HepG2 (cell line): ENCODE measurements at regions of chr17 and their contacts with region 1.

Region 1: GRCh38 chr17:73156166-73156840 is 8.5 kb upstream of the SSTR2 start:
- DNase-seq: peak; percentile 70
- ATAC-seq: peak; percentile 95
- H3K4me3 ChIP-seq: peak overlapping the region in 2 of 3 experiments; percentile 13 to 51; a peak in 4 of 6 replicates
- H3K27ac ChIP-seq: no peak overlapping the region
- H3K4me1 ChIP-seq: peaks cover 59% of the 10 kb centered on the region
- H3K27me3 ChIP-seq: peaks cover 10 to 64% of the 10 kb centered on the region in 2 experiments
- CTCF ChIP-seq: peak; percentile 94
- EP300 ChIP-seq: no peak
- POLR2A ChIP-seq: no peak
- RAD21 ChIP-seq: peak; percentile 94

Region 2: DNA sequence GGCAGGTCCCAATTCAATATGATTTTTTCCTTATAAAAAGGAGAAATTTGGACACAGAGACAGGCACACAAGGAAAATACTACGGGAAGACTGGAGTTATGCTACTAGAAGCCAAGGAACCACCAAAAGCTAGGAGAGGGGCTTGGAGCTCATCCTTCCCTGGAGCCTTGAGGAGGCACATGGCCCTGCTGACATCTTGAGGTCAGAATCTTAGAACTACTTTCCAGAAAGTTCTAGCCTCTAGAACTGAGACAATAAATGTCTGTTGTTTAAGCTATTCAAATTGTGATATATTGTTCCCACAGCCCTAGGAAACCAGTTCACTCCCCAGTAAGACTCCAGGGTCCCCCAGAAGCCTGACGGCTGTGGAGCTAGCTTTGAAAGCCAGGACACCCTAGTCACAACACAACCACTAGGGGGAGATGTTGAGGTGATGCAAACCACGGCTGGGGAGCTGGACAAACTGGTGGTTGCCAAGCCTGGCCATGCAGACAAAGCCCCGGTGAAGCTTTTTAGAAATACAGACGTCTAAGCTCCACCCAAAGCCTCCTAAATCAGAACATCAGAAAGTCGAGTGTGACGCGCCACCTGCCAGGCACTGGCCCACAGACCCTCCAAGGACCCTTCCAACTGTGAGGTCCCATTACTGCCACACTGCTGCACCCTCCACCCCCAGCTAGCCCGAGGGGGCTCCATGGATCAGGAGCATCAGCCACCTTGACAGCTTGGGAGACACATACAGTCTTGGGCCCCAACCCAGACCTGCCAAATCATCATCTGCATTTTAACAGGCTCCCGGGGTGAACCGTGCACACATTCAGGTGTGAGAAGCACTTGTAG is 170.2 kb before region 1 on chr17:
- CTCF ChIA-PET with region 1: interaction called, 22 read pairs
- POLR2A ChIA-PET with region 1: interaction called, 4 read pairs
- in situ Hi-C with region 1: loop called (anchors 5 kb)
- intact Hi-C with region 1: loop called (anchors 1 kb)
- DNase-seq: peak; percentile 79
- ATAC-seq: peak; percentile 97
- H3K4me3 ChIP-seq: no peak overlapping the region
- H3K27ac ChIP-seq: no peak overlapping the region
- H3K4me1 ChIP-seq: peaks cover 26% of the 10 kb centered on the region
- H3K27me3 ChIP-seq: no peaks in the 10 kb centered on the region
- CTCF ChIP-seq: peak; percentile 92
- EP300 ChIP-seq: no peak
- POLR2A ChIP-seq: no peak
- RAD21 ChIP-seq: peak; percentile 95

Region 3: DNA sequence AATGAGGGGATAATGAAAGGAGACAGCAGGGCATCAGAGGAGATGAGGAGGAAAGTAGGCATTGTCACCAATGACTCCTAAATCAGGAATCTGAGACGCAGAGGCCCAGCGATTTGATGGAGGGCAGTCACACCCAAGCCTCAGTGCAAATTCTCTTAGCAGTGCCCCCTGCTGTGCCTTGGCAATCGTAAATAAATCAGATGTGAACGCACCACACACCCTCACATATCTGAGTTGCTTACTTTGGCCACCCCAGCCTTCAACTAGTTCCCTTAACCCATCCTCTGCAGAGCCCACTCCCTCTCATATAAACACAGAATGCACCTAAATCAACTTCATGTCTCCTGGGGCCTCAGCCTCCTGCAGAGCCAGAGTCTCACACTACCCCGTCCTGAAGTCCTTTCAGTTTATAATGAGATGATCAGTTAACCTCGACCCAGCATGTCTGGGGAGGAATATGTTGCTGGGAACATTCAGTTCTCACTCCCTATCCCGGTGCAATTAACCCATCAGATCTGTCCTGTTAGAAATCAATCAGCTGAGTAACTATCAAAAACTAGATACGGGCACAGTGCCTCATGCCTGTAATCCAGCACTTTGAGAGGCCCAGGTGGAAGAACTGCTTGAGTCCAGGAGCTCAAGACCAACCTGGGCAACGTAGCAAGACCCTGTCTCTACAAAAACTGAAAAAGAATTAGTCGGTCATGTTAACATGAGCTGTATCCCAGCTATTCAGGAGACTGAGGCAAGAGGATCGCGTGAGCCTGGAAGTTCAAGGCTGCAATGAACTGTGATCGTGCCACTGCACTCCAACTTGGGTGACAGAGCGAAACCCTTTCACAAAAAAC is 142.3 kb before region 1 on chr17:
- CTCF ChIA-PET with region 1: interaction called, 3 read pairs
- POLR2A ChIA-PET with region 1: no interaction called
- in situ Hi-C with region 1: no loop called
- intact Hi-C with region 1: loop called (anchors 10 kb)
- DNase-seq: no peak
- ATAC-seq: no peak
- H3K4me3 ChIP-seq: no peak overlapping the region
- H3K27ac ChIP-seq: no peak overlapping the region
- H3K4me1 ChIP-seq: peaks cover 19% of the 10 kb centered on the region
- H3K27me3 ChIP-seq: no peaks in the 10 kb centered on the region
- CTCF ChIP-seq: no peak
- EP300 ChIP-seq: no peak
- POLR2A ChIP-seq: no peak
- RAD21 ChIP-seq: no peak

Region 4: GRCh38 chr17:73132085-73132492 is 24.2 kb before region 1 on chr17:
- CTCF ChIA-PET with region 1: no interaction called
- POLR2A ChIA-PET with region 1: no interaction called
- in situ Hi-C with region 1: no loop called
- intact Hi-C with region 1: no loop called
- DNase-seq: no peak
- ATAC-seq: no peak
- H3K4me3 ChIP-seq: no peak overlapping the region
- H3K27ac ChIP-seq: no peak overlapping the region
- H3K4me1 ChIP-seq: peaks cover 4% of the 10 kb centered on the region; the same call in 1 of the 2 replicates
- H3K27me3 ChIP-seq: peaks cover 0 to 7% of the 10 kb centered on the region in 2 experiments; a peak in 2 of 5 replicates
- CTCF ChIP-seq: no peak
- EP300 ChIP-seq: no peak
- POLR2A ChIP-seq: no peak
- RAD21 ChIP-seq: no peak

Region 5: GRCh38 chr17:73240561-73240960 is 84.3 kb after region 1 on chr17:
- CTCF ChIA-PET with region 1: no interaction called
- POLR2A ChIA-PET with region 1: no interaction called
- in situ Hi-C with region 1: no loop called
- intact Hi-C with region 1: no loop called
- DNase-seq: no peak
- ATAC-seq: no peak
- H3K4me3 ChIP-seq: no peak overlapping the region
- H3K27ac ChIP-seq: no peak overlapping the region
- H3K4me1 ChIP-seq: peaks cover 35% of the 10 kb centered on the region
- H3K27me3 ChIP-seq: no peaks in the 10 kb centered on the region
- CTCF ChIP-seq: no peak
- EP300 ChIP-seq: no peak
- POLR2A ChIP-seq: no peak
- RAD21 ChIP-seq: no peak